Heart right ventricle (tissue), 16 donors: ENCODE measurements at regions of chr16 and their contacts with region 1.

Region 1: GRCh38 chr16:55711959-55712876 is 56.4 kb downstream of the SLC6A2 start:
- DNase-seq: peak; percentile 54 to 59
- ATAC-seq: peak in 6 of 8 donors; percentile 53 to 72 (median 64)
- H3K4me3 ChIP-seq: no peak overlapping the region
- H3K27ac ChIP-seq: no peak overlapping the region
- H3K4me1 ChIP-seq: no peaks in the 10 kb centered on the region
- H3K27me3 ChIP-seq: peaks cover 0 to 69% (median 15%) of the 10 kb centered on the region in 7 donors
- CTCF ChIP-seq: peak; percentile 50 to 81 (median 74)

Region 2: GRCh38 chr16:55842369-55843104 is 130.3 kb after region 1 on chr16:
- intact Hi-C with region 1: loop called (anchors 1 to 2 kb)
- DNase-seq: peak in 1 of 2 donors; percentile 35
- ATAC-seq: peak in 4 of 8 donors; percentile 46 to 69 (median 53)
- H3K4me3 ChIP-seq: no peak overlapping the region
- H3K27ac ChIP-seq: no peak overlapping the region
- H3K4me1 ChIP-seq: no peaks in the 10 kb centered on the region
- H3K27me3 ChIP-seq: peaks cover 0 to 44% (median 24%) of the 10 kb centered on the region in 7 donors
- CTCF ChIP-seq: peak; percentile 64 to 86 (median 79)

Region 3: DNA sequence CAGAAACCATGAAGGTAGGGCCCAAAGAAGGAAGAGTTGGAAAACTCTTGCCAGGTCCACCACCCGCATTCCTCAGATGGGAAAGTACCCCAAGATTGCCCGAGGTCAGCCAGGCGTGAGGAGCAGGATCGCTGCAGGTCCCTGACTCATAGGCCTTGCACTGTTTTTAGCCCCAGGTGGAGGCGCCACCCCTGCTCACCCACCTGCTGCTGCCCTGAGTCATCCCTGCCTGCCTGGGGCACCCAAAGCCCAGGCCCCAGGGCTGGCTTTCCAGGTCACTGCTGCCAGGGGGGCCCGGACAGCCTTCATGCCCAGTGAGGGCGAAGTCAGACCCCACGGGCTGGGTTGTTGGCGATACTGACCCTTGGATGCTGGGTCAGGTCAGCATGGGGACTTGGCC is 612.2 kb after region 1 on chr16:
- intact Hi-C with region 1: loop called in 3 of 10 experiments (anchors 10 kb)
- DNase-seq: no peak
- ATAC-seq: no peak
- H3K4me3 ChIP-seq: no peak overlapping the region
- H3K27ac ChIP-seq: no peak overlapping the region
- H3K4me1 ChIP-seq: no peaks in the 10 kb centered on the region
- H3K27me3 ChIP-seq: no peaks in the 10 kb centered on the region
- CTCF ChIP-seq: no peak